Activated CD8-positive, alpha-beta memory T cell treated with anti-CD3 and anti-CD28 coated beads, Interleukin-2, amount 10 ng/mL, durations not matched to agents 7 days and 5 days (primary cell): ENCODE measurements at regions of chr21 and their contacts with region 1.

Region 1: GRCh38 chr21:44949779-44950198 is 10.0 kb downstream of the SLX9 start:
- DNase-seq: peak; percentile 88
- ATAC-seq: peak; percentile 89
- H3K4me3 Mint-ChIP-seq: no peak overlapping the region
- H3K27ac Mint-ChIP-seq: no peak overlapping the region
- H3K4me1 Mint-ChIP-seq: peaks cover 4% of the 10 kb centered on the region
- H3K27me3 Mint-ChIP-seq: no peaks in the 10 kb centered on the region

Region 2: DNA sequence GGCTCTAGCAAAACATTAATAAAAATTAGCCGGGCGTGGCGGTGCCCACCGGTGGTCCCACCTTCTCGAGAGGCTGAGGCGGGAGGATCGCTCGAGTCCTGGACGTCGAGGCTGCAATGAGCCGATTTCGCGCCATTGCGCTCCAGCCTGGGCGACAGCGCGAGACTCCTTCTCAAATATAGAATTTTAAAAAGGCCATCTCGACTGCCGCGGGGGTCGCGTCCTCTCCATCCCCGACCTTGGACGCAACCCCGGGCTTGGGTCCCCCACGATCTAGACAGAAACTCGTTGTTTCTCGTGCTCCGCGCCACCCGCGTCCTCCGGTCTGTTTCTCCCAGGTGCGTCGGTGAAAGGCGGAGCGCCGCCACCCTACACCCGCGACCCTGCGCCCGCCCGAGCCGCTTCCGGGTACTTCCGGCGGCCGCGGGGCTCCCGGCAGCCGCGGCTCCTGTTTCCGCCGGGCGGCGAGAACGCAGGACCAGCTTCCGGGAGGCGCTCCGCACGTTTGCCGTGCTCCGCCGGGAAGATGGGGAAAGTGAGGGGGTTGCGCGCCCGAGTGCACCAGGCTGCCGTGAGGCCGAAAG is 10.2 kb before region 1 on chr21 and contains the start of gene SLX9:
- CTCF ChIA-PET with region 1: interaction called, 22 read pairs
- DNase-seq: peak; percentile 82
- ATAC-seq: peak; percentile 92
- H3K4me3 Mint-ChIP-seq: peak within 1 kb of the TSS; percentile 85
- H3K27ac Mint-ChIP-seq: peak within 1 kb of the TSS; percentile 83
- H3K4me1 Mint-ChIP-seq: peaks cover 46% of the 10 kb centered on the region
- H3K27me3 Mint-ChIP-seq: no peaks in the 10 kb centered on the region
- total RNA-seq, gene SLX9: 56.8 to 62.9 TPM

Region 3: DNA sequence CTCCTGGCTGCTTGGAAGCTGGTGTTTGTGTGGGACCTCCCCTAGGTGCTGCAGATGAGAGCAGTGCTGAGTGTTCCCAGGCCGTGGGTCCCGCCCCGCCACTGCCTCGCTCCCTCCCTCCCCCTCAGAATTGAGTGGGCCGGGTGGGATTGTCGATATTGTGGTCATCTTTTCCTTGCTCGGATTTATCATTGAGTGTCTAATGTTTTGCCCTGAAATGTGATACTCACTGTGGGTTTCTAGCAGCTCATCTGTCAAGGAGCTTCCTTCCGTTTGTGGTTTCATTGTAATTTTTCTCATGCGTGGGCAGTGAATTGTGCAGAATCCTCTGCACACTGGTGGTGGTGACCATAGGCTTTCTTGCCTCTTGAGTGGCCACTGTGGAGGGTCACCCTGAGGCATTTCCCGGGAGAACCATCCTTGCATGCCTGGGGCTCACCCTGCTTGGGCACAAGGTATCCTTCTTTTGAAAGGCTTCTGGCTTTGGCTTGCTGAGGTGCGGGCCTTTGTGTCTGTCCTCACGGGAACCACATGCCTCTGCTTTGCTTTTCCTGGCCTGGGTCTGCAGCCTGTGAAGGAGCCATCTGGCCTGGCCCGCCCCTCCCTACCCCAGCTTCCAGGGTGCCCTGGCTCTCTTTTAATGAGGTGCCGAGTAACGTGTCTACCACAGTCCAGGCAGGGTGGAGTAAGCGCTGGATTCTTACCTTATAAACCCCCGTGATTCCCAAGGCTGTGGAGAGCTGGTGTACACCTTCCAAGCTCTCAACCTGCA is 15.6 kb after region 1 on chr21:
- CTCF ChIA-PET with region 1: interaction called, 10 read pairs
- DNase-seq: peak; percentile 47
- ATAC-seq: peak; percentile 62
- H3K4me3 Mint-ChIP-seq: no peak overlapping the region
- H3K27ac Mint-ChIP-seq: no peak overlapping the region
- H3K4me1 Mint-ChIP-seq: peaks cover 37% of the 10 kb centered on the region
- H3K27me3 Mint-ChIP-seq: no peaks in the 10 kb centered on the region

Region 4: GRCh38 chr21:45074818-45075595 is 125.2 kb after region 1 on chr21:
- CTCF ChIA-PET with region 1: interaction called, 15 read pairs
- DNase-seq: no peak
- ATAC-seq: peak; percentile 7
- H3K4me3 Mint-ChIP-seq: peak overlapping the region; percentile 76
- H3K27ac Mint-ChIP-seq: no peak overlapping the region
- H3K4me1 Mint-ChIP-seq: peaks cover 48% of the 10 kb centered on the region
- H3K27me3 Mint-ChIP-seq: peaks cover 9% of the 10 kb centered on the region

Region 5: DNA sequence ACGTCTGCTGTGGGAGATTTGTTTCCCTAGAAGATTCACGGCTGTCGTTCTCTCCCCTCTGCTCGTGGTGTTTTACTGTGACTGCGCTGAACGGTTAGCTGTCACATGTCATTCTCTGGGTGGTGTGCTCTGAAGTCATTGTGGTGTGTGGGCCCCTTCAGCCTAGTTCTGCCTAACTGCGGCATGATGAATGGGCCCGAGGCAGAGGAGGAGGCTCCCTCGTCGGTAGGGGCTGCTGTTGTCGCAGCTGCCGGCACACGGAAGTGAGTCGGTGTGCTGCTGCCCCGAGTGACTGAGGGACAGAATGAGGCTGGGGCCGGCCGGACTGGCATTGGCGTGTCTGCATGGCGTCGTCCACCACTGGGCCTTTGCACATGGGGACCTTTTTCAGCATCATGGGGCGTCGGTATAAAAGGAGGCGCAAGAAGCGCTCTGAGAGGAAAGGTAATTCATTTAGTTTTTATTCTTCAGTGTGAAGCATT is 202.5 kb after region 1 on chr21:
- CTCF ChIA-PET with region 1: interaction called, 10 read pairs
- DNase-seq: peak; percentile 92
- ATAC-seq: peak; percentile 97
- H3K4me3 Mint-ChIP-seq: peak overlapping the region; percentile 75
- H3K27ac Mint-ChIP-seq: peak overlapping the region; percentile 88
- H3K4me1 Mint-ChIP-seq: peaks cover 44% of the 10 kb centered on the region
- H3K27me3 Mint-ChIP-seq: no peaks in the 10 kb centered on the region